ENCODE measurements at regions of chr17 and their contacts with region 1.

Region 1: DNA sequence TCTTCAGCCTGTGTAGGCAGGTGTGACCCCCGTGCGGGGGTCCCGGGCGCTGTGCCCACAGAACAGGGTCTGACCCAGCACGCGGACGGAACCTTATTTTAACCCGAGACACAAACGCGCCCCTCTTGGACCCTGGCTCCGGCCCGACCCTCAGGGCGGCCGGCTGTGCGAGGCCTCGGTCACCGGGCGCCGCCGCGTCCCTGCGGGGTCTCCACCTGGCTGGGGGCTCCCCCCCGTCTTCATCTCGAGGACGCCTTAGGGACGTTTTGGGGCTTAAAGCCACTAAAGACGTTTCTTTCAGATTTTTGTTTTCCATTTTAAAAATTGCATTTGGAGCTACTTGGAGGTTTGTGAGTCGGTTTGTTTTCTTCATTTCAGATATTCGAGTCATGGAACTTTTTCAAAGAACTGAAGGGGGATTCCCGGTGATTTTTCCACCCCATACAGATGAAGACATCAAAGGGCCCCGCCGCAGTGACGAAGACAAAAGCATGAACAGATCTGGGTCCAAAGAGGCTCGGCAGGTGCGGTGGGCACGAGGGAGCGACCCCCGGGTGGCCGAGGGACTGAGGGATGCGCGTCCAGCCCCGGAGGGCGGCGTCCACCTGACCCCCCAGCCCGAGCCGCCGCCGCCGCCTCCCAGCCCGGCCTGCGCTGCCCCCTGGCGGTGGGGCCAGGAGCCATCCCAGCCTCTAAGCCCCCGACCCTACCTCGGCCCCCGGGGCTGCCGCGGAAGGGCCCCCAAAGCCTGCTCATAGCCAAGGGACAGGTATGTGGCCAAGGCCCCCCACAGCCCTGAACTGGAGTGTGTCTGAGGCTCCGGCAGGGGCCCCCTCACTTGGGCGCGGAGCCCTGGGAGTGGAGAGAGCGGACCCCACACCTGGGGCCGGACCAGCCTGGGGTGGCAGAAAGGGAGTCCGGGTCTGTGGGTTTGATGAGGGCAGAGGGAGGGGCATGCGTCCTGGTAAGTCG is 3.8 kb upstream of the CD7 start:
- DNase-seq: peak; percentile 93
- H3K4me3 Mint-ChIP-seq: peak overlapping the region; percentile 83
- H3K27ac Mint-ChIP-seq: peak overlapping the region; percentile 94
- H3K4me1 Mint-ChIP-seq: peaks cover 31% of the 10 kb centered on the region
- H3K27me3 Mint-ChIP-seq: no peaks in the 10 kb centered on the region

Region 2: DNA sequence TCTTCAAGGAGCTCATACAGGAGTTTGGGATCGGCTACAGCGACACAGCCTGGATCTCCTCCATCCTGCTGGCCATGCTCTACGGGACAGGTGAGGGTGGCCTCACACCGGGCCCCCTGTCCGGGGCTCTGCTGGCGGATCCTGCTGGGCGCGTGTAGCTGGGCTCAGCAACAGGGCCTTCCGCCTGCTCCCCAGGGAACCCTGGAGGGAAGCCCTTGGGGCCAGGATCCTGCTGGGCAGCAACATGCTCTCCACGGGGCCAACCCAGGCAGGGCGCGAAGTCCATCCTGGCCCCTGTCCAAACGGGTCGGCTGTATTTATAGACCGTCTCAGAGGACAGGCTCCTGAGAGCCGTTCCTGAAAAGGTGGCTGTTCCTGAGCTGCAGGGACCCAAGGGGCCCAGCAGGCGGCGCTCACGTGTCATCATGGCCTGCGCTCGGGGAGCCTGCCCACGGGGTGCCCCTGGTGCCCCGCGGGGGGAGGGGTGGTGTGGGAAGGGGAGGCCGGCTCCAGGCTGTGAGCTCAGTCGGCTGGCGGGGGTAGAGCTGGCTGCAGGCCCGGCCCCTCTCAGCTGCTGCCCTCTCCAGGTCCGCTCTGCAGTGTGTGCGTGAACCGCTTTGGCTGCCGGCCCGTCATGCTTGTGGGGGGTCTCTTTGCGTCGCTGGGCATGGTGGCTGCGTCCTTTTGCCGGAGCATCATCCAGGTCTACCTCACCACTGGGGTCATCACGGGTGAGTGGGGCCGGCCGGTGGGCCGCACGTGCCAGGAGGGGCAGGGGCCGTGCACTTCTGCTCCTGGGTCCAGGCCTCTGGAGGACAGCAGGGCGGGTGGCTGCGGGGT is 84.9 kb before region 1 on chr17:
- intact Hi-C with region 1: loop called (anchors 1 kb)
- DNase-seq: peak; percentile 91
- H3K4me3 Mint-ChIP-seq: peak overlapping the region; percentile 35
- H3K27ac Mint-ChIP-seq: no peak overlapping the region
- H3K4me1 Mint-ChIP-seq: peaks cover 28% of the 10 kb centered on the region
- H3K27me3 Mint-ChIP-seq: no peaks in the 10 kb centered on the region

Region 3: DNA sequence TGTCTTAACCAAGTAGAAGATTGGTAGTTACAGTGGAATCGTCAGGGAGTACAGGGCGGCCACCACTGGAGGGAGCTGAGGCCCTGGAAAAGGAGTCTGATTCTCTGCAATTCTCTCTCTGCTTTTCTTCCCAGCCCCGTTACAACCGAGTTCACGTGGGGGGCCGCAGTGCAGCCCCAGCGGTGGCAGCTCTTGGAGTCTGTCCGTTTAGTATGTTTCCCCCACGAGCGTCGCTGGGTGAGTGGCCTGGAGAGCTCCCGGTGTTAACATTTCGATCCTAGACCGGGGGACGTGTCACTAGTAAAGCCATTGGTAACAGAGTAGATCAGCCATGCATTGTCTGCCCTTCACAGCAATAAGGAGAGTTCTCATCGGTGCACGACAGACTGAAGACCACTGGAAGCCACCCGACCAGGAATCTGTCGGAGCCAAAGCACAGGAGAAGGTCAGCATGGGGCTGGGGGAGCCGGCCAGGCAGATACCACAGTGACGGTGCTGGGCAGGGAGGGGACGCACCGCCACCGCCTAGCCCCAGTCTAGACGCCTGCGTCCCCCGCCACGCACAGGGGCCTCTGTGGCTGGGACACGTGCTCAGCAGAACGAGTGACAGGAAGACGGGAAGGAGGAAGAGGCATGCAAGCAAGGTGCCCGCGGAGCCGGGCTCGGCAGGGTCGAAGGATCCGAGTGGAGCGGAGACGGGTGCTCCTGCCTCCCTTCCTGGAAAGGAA is 76.7 kb before region 1 on chr17:
- intact Hi-C with region 1: loop called (anchors 2 kb)
- DNase-seq: peak; percentile 77
- H3K4me3 Mint-ChIP-seq: no peak overlapping the region
- H3K27ac Mint-ChIP-seq: peak overlapping the region; percentile 36
- H3K4me1 Mint-ChIP-seq: peaks cover 21% of the 10 kb centered on the region
- H3K27me3 Mint-ChIP-seq: no peaks in the 10 kb centered on the region

Region 4: DNA sequence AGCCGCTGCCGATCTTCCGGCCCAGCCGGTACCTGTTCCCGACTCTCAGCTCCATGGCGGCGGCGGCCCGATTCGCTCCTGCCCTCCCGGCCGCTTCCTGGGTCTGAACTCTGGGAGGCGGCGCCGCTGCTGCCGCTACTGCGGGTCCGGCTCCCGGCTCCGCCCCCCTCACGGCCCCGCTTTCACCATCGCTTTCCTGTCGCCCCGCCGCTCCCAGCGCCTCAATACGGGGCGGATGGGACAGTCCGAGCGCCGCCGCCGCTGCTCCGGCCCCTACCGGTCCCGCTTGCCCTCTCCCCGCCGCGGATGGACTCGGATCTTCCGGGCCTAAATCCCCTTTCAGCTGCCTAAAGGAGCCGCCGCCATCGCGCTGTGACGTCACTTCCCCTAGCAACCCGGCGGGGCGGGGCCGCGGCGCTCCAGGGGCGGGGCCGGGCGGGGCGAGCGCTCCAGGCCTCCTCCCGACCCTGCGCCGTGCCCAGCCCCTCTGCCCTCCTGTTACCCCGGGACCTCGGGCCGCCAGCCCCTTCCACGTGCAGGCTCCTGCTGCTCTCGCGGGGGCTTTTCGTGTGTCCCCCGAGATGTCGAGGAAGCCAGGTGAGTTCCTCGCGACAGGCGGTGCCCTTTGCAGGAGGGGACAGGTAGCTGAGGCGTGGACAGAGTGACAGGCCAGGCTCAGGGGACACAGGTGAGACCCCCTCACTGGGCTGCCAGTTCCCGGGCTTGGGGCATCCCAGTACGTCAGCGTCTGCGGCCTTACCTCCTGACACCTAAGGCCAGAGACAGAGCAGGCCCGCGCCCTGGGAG is 47.7 kb before region 1 on chr17 and contains the start of gene CSNK1D:
- intact Hi-C with region 1: loop called (anchors 1 kb)
- DNase-seq: peak; percentile 97
- H3K4me3 Mint-ChIP-seq: peak within 1 kb of the TSS; percentile 88
- H3K27ac Mint-ChIP-seq: peak within 1 kb of the TSS; percentile 100
- H3K4me1 Mint-ChIP-seq: peaks cover 35% of the 10 kb centered on the region
- H3K27me3 Mint-ChIP-seq: peaks cover 2% of the 10 kb centered on the region
- total RNA-seq, gene CSNK1D: 137 and 146 TPM in 2 replicates

Region 5: GRCh38 chr17:82297714-82298537 is 23.3 kb before region 1 on chr17:
- intact Hi-C with region 1: loop called (anchors 1 kb)
- DNase-seq: peak; percentile 98
- H3K4me3 Mint-ChIP-seq: peak overlapping the region; percentile 92
- H3K27ac Mint-ChIP-seq: peak overlapping the region; percentile 100
- H3K4me1 Mint-ChIP-seq: peaks cover 69% of the 10 kb centered on the region
- H3K27me3 Mint-ChIP-seq: peaks cover 2% of the 10 kb centered on the region

Region 6: GRCh38 chr17:82305727-82306300 is 15.4 kb before region 1 on chr17:
- intact Hi-C with region 1: loop called (anchors 1 kb)
- DNase-seq: no peak
- H3K4me3 Mint-ChIP-seq: peak overlapping the region; percentile 30
- H3K27ac Mint-ChIP-seq: peak overlapping the region; percentile 92
- H3K4me1 Mint-ChIP-seq: peaks cover 39% of the 10 kb centered on the region
- H3K27me3 Mint-ChIP-seq: peaks cover 4% of the 10 kb centered on the region